BJ (cell line): ENCODE measurements at regions of chr5 and their contacts with region 1.

Region 1: DNA sequence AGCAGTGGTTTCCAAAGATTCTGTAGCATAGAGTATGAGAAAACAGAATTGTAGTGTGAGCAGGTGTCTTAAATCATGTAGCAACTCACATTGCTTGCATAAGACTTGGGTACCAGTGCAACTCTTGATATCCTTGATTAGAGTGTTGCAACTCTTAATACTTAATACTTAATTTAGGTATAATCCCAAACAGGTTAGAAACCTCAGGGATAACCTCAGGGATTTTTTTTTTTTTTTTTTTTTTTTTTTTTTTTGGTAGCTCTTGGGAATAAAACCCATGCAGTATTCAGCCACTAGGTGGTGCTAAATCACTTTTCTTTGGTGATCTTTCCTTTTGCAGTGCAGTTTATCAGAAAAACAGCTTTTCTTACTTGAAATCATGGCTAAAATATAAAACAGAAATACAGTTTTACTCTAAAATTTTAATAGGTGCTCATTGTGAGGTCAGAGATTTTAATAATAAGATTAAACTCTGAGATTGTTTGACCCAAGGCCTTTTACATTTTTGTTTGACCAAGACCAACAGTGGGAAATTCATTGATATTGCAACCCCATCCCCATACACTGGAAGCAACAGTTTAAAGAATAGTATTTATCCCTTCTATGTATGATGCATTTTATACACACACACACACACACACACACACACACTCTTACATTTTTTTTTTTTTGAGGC is 55.3 kb downstream of the ERAP1 start:
- DNase-seq: peak; percentile 13
- H3K4me3 ChIP-seq: no peak overlapping the region
- H3K27me3 ChIP-seq: no peaks in the 10 kb centered on the region
- CTCF ChIP-seq: peak; percentile 63

Region 2: DNA sequence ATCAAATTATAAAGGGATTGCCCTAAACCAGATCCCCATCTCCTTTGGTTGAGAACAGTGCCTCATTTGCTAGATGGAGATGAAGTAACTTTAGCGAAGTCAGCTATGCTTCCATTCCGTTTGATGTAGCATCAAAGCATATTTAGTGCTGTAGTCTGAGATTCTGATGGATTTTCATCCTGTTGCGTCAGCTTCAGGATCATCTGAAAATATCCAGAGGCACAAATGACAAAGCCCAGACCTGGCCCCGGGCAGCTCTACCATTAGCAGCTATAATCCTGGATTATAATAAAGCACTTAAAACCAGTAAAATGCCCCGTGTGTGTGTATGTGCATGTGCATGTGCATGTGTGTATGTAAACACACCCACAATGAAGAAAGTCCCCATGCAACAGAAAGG is 10.5 kb after region 1 on chr5:
- CTCF ChIA-PET with region 1: interaction called, 23 read pairs
- POLR2A ChIA-PET with region 1: no interaction called
- DNase-seq: no peak
- H3K4me3 ChIP-seq: no peak overlapping the region
- H3K27me3 ChIP-seq: no peaks in the 10 kb centered on the region
- CTCF ChIP-seq: no peak

Region 3: GRCh38 chr5:96768708-96769251 is 16.3 kb after region 1 on chr5:
- CTCF ChIA-PET with region 1: interaction called, 23 read pairs
- POLR2A ChIA-PET with region 1: no interaction called
- DNase-seq: no peak
- H3K4me3 ChIP-seq: no peak overlapping the region
- H3K27me3 ChIP-seq: no peaks in the 10 kb centered on the region
- CTCF ChIP-seq: no peak

Region 4: DNA sequence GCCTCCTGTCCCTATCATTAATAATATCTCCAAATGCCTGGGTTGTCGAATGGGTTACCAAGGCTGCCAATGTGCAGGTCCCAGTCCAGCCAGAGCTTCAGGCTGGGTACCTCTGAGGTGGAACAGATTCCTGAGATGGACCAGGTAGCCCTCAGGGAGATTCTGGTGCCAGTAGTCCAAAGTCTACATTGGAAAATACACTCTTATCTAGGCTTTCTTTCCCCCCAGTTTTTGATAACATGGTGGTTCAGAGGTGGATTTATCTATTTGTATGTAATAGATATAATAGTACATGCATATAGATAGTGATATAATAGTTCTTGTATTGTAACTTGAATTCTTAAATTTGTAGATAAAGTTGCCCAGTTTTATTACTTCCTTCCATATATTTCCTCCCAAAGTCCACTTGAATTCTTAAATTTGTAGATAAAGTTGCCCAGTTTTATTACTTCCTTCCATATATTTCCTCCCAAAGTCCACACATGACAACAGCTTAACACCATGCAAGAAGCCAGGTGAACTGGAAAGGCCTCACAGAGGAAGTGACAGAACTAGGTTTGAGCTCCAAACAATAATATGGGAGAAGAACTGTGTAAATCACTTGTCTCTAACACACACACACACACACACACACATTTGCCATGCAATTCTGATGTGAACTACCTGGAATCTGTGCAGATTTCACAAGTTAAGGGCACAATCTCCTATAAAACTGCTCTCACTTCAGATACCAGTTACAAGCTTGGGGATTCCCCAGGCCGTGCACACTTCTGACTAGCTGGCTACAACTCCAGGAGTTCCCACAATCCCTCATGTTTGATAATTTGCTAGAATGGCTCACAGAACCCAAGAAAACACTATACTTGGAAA is 86.0 kb after region 1 on chr5:
- CTCF ChIA-PET with region 1: no interaction called
- POLR2A ChIA-PET with region 1: no interaction called
- DNase-seq: no peak
- H3K4me3 ChIP-seq: no peak overlapping the region
- H3K27me3 ChIP-seq: no peaks in the 10 kb centered on the region
- CTCF ChIP-seq: no peak